ENCODE measurements at regions of chr18 and their contacts with region 1.

Region 1: DNA sequence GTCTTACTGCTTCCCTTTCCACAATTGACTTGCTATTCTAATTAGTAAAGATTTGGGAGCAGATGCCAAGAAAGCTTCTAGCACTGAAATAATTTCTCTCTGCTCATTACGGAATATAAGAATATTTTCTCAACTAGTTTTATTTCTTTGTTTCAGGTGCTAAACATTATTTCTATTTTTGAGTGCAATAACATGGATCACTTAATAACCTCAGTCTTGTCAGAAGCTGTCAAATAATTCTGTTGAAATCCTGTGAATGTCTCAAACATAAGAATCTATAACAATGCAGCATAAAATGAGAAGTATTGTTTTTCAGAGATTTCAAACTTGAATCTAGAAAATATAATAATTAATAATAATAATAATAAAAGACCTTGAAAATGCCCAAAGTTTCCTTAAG is 1221.0 kb downstream of the DSC3 start:
- DNase-seq: no peak
- H3K4me3 Mint-ChIP-seq: no peak overlapping the region
- H3K27ac Mint-ChIP-seq: no peak overlapping the region
- H3K4me1 Mint-ChIP-seq: no peaks in the 10 kb centered on the region
- H3K27me3 Mint-ChIP-seq: no peaks in the 10 kb centered on the region
- CTCF ChIP-seq: no peak

Region 2: DNA sequence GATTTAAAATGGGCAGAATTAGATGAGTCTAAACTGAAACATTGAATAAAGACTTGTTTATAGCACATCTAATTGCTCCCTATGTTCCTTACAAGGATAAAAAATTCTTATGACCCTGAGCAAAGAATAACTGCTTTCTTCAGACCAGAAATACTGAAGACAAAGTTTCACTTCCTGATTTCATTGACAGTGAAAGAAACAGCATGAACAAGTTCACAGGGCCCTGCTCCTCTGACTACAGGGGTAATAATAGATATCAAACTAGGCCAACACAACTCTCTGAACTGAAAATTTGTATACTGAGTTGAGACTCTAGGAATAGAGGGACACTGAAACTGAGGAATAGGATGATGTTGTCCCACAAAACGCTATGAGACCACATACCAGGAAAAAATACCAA is 261.3 kb before region 1 on chr18:
- CTCF ChIA-PET with region 1: interaction called, 10 read pairs
- intact Hi-C with region 1: no loop called
- DNase-seq: no peak
- H3K4me3 Mint-ChIP-seq: no peak overlapping the region
- H3K27ac Mint-ChIP-seq: no peak overlapping the region
- H3K4me1 Mint-ChIP-seq: no peaks in the 10 kb centered on the region
- H3K27me3 Mint-ChIP-seq: no peaks in the 10 kb centered on the region
- CTCF ChIP-seq: no peak

Region 3: DNA sequence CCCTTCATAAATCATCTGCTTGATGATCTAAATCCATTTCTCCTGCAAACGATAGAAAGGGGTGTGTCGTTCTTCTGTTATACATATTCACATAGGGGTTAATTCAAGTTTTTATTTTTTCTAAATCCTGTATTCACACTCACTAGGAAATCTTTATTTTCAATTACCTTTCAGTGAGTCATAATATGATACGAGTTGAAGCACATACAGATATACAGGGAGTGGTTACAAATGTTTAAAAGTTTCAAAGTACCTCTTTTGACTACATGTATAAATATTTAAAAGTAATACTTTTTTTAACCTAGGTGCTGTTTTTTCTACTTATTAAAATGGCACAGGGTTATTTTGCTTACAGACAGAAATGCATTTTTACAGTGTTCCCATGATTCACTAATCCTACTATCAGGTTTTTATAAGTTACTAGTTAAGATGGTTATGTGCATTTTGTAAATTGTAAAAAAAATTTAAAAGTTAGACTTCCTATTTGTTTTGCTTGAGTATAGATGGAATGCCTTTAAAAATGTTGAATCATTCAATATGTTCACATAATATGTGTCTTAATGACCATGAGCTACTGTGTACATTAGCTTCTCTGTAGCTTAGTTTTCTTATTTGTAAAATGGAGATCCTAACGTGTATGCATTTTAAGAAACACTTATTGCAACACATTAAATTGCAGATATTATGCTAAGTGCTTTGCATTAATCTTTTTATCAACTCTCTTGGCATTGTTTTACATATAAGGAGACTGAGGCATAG is 157.1 kb before region 1 on chr18:
- CTCF ChIA-PET with region 1: no interaction called
- intact Hi-C with region 1: no loop called
- DNase-seq: no peak
- H3K4me3 Mint-ChIP-seq: no peak overlapping the region
- H3K27ac Mint-ChIP-seq: no peak overlapping the region
- H3K4me1 Mint-ChIP-seq: no peaks in the 10 kb centered on the region
- H3K27me3 Mint-ChIP-seq: no peaks in the 10 kb centered on the region
- CTCF ChIP-seq: no peak